CD4-positive, alpha-beta T cell (primary cell): ENCODE measurements at regions of chr15 and their contacts with region 1.

Region 1: GRCh38 chr15:65384895-65385858 is 7.4 kb upstream of the IGDCC3 start:
- DNase-seq: peak; percentile 72 to 90 (median 81)
- ATAC-seq: peak; percentile 93
- H3K4me3 ChIP-seq: peak overlapping the region; percentile 83
- H3K4me3 Mint-ChIP-seq: peak overlapping the region; percentile 95
- H3K27ac ChIP-seq: peak overlapping the region in 1 of 2 donors; percentile 15
- H3K27ac Mint-ChIP-seq: no peak overlapping the region
- H3K4me1 ChIP-seq: peaks cover 17% of the 10 kb centered on the region
- H3K4me1 Mint-ChIP-seq: peaks cover 4% of the 10 kb centered on the region
- H3K27me3 ChIP-seq: peaks cover 3 to 5% of the 10 kb centered on the region in 2 experiments
- H3K27me3 Mint-ChIP-seq: peaks cover 29% of the 10 kb centered on the region
- CTCF ChIP-seq: peak; percentile 75

Region 2: DNA sequence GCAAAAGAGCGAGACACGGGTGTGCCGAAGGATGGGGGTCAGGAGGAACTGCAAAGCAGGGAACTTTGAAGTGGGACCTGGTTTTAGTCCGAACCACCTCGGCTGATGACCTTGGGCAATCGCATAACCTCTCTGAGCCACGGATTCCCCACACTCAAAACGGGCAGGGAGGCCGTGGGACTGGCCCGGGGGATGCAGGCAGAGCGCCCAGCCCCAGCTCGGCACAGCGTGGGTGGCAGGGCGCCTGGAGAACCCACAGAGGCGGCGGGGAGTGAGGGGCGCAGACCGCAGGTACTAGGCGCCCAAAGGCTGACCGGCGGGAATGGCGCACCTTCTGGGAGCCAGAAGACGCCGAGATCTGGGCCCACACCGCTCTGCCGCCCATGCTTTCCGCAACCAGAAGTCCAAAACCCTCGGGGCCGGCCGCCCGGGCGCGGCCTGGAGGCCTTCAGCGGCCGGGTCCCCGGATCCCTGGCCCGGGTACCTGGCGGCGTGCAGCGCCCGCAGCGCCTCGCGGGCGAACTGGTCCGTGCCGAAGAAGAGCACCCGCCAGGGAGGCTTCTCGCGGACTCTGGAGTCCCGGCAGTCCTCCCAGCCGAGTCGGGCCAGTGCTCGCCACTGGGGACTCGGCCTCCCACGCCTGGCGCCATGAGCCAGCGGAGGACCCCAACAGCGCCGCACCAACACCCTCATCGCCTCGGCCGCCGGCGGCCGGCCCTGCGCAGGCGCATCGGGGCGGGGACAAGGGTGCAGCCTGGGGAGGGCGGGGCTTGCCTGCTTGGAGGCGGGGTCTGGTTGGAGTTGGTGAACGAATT is 356.0 kb before region 1 on chr15 and contains the start of gene MTFMT:
- CTCF ChIA-PET with region 1: no interaction called
- POLR2A ChIA-PET with region 1: no interaction called
- intact Hi-C with region 1: loop called (anchors 1 to 2 kb)
- DNase-seq: peak; percentile 86 to 98 (median 92)
- ATAC-seq: peak; percentile 94
- H3K4me3 ChIP-seq: peak within 1 kb of the TSS; percentile 72
- H3K4me3 Mint-ChIP-seq: peak within 1 kb of the TSS; percentile 98
- H3K27ac ChIP-seq: peak within 1 kb of the TSS; percentile 29 to 37
- H3K27ac Mint-ChIP-seq: peak within 1 kb of the TSS; percentile 66
- H3K4me1 ChIP-seq: peaks cover 25% of the 10 kb centered on the region
- H3K4me1 Mint-ChIP-seq: peaks cover 25% of the 10 kb centered on the region
- H3K27me3 ChIP-seq: peaks cover 0 to 6% of the 10 kb centered on the region in 2 experiments
- H3K27me3 Mint-ChIP-seq: peaks cover 15% of the 10 kb centered on the region
- CTCF ChIP-seq: no peak
- total RNA-seq, gene MTFMT: 3.4 to 5.8 TPM

Region 3: DNA sequence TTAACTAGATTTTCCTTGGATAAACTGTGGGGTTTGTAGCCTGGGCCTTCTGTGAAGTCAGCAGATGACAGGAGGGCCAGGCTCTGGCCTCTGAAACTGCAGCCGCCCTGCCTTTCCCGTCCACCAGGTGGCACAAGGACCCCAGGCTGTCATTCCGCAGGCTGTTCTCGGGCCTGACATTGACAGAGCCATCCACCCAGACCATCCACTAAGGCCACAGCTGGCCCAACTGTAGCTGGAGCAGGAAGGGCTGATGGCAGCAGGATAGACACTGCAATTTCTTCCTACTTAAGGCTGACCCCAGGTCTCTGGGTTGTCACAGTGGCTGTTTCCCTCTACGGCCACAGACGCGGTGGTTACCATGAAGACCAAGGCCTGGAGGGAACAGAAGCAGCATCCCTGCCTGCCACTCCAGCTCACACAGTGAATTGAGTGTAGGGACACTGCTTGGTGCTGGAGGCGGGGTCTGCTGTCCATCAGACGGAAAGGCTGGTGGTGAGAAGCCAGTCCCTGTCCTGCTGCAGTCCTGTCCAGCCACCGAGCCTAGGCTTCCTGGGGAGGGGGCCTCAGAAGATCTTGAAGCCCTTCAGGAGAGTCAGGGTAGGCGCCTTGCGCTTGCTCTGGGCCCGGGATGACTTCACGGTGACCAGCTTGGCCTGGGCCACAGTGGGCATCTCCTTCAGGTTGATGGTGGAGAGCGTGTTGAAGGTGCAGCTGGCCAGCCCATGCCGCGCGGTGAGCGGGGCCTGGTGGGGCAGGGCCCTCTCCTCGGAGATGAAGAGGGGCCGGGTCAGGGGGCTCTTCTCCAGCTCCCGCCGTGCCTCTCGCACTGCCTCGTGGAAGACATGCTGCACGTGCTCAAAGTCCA is 330.6 kb before region 1 on chr15:
- CTCF ChIA-PET with region 1: no interaction called
- POLR2A ChIA-PET with region 1: no interaction called
- intact Hi-C with region 1: loop called in 1 of 2 experiments (anchors 2 kb)
- DNase-seq: peak; percentile 26 to 72 (median 40)
- ATAC-seq: peak; percentile 35
- H3K4me3 ChIP-seq: no peak overlapping the region
- H3K4me3 Mint-ChIP-seq: no peak overlapping the region
- H3K27ac ChIP-seq: no peak overlapping the region
- H3K27ac Mint-ChIP-seq: no peak overlapping the region
- H3K4me1 ChIP-seq: peaks cover 6% of the 10 kb centered on the region
- H3K4me1 Mint-ChIP-seq: peaks cover 7% of the 10 kb centered on the region
- H3K27me3 ChIP-seq: peaks cover 0 to 6% of the 10 kb centered on the region in 2 experiments
- H3K27me3 Mint-ChIP-seq: no peaks in the 10 kb centered on the region
- CTCF ChIP-seq: peak; percentile 72

Region 4: GRCh38 chr15:65184868-65185738 is 200.1 kb before region 1 on chr15 and contains the start of gene CLPX:
- CTCF ChIA-PET with region 1: no interaction called
- POLR2A ChIA-PET with region 1: no interaction called
- intact Hi-C with region 1: loop called in 1 of 2 experiments (anchors 5 kb)
- DNase-seq: peak; percentile 84 to 99 (median 90)
- ATAC-seq: peak; percentile 97
- H3K4me3 ChIP-seq: peak within 1 kb of the TSS; percentile 91
- H3K4me3 Mint-ChIP-seq: peak within 1 kb of the TSS; percentile 94
- H3K27ac ChIP-seq: peak within 1 kb of the TSS; percentile 82 to 86
- H3K27ac Mint-ChIP-seq: peak within 1 kb of the TSS; percentile 85
- H3K4me1 ChIP-seq: peaks cover 29% of the 10 kb centered on the region
- H3K4me1 Mint-ChIP-seq: peaks cover 33% of the 10 kb centered on the region
- H3K27me3 ChIP-seq: no peaks in the 10 kb centered on the region
- H3K27me3 Mint-ChIP-seq: no peaks in the 10 kb centered on the region
- CTCF ChIP-seq: no peak
- total RNA-seq, gene CLPX: 29.1 to 36.3 TPM

Region 5: DNA sequence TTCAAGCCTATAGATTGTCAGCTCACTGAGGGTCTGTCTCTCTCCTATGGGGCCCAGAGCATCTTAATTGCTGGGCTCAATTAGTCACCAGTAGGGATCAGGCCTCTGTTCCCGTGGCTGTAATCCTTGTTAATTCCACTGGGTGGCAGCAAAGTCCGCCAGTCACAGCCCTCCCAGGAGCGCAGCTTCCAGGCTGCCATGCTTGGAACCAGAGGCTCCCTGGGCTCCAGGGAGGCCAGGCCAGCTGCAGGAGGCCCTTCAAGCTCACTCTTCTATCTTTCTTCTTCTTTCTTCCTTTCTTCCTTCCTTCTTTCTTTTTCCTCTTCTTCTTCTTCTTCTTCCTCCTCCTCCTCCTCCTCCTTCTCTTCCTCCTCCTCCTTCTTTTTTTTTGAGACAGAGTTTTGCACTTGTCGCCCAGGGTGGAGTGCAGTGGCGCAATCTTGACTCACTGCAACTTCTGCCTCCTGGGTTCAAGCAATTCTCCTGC is 66.3 kb before region 1 on chr15:
- CTCF ChIA-PET with region 1: interaction called, 21 read pairs
- POLR2A ChIA-PET with region 1: interaction called, 5 read pairs
- intact Hi-C with region 1: loop called (anchors 1 kb)
- DNase-seq: peak; percentile 56 to 87 (median 69)
- ATAC-seq: peak; percentile 100
- H3K4me3 ChIP-seq: no peak overlapping the region
- H3K4me3 Mint-ChIP-seq: no peak overlapping the region
- H3K27ac ChIP-seq: no peak overlapping the region
- H3K27ac Mint-ChIP-seq: no peak overlapping the region
- H3K4me1 ChIP-seq: peaks cover 2% of the 10 kb centered on the region
- H3K4me1 Mint-ChIP-seq: no peaks in the 10 kb centered on the region
- H3K27me3 ChIP-seq: peaks cover 0 to 8% of the 10 kb centered on the region in 2 experiments
- H3K27me3 Mint-ChIP-seq: peaks cover 4% of the 10 kb centered on the region
- CTCF ChIP-seq: peak; percentile 92

Region 6: GRCh38 chr15:65580287-65580686 is 195.1 kb after region 1 on chr15:
- CTCF ChIA-PET with region 1: no interaction called
- POLR2A ChIA-PET with region 1: no interaction called
- intact Hi-C with region 1: no loop called
- DNase-seq: no peak
- ATAC-seq: no peak
- H3K4me3 ChIP-seq: no peak overlapping the region
- H3K4me3 Mint-ChIP-seq: no peak overlapping the region
- H3K27ac ChIP-seq: no peak overlapping the region
- H3K27ac Mint-ChIP-seq: peak overlapping the region; percentile 69
- H3K4me1 ChIP-seq: peaks cover 4% of the 10 kb centered on the region
- H3K4me1 Mint-ChIP-seq: peaks cover 30% of the 10 kb centered on the region
- H3K27me3 ChIP-seq: no peaks in the 10 kb centered on the region
- H3K27me3 Mint-ChIP-seq: no peaks in the 10 kb centered on the region
- CTCF ChIP-seq: no peak

Region 7: GRCh38 chr15:65856821-65857455 is 471.8 kb after region 1 on chr15:
- CTCF ChIA-PET with region 1: no interaction called
- POLR2A ChIA-PET with region 1: no interaction called
- intact Hi-C with region 1: loop called in 1 of 2 experiments (anchors 5 kb)
- DNase-seq: peak; percentile 73 to 91 (median 80)
- ATAC-seq: peak; percentile 94
- H3K4me3 ChIP-seq: no peak overlapping the region
- H3K4me3 Mint-ChIP-seq: no peak overlapping the region
- H3K27ac ChIP-seq: no peak overlapping the region
- H3K27ac Mint-ChIP-seq: no peak overlapping the region
- H3K4me1 ChIP-seq: no peaks in the 10 kb centered on the region
- H3K4me1 Mint-ChIP-seq: peaks cover 6% of the 10 kb centered on the region
- H3K27me3 ChIP-seq: no peaks in the 10 kb centered on the region
- H3K27me3 Mint-ChIP-seq: no peaks in the 10 kb centered on the region
- CTCF ChIP-seq: peak; percentile 92